Transverse colon (tissue), 4 donors: ENCODE measurements at regions of chr10 and their contacts with region 1.

Region 1: DNA sequence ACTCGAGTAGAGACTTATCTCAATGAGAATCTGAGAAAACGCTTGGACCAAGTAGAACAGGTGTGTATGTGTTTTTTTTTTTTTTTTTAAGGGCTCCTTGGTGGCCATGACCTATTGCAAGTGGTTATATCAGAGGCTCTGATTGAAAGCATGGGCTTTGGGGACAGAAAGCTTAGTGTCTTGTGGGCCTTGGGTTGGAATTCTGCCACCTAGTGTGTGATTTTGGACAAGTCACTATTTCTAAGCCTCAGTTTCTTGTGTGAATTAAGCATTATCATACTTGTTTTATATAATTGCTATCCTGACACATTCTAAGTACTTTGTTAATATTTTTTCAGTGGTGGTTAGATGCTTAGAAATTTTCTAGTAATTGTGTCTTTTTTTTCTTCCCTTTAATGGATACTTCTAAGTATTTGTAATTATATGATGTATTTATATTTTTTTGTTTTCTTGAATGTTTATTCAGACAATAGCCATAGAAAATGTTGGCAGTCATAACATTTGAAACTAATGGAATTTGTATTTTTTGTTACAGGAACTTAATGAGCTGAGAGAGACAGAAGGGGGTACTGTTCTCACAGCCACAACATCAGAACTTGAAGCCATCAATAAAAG is 33.1 kb downstream of the SMC3 start:
- DNase-seq: no peak
- H3K4me3 ChIP-seq: no peak overlapping the region
- H3K27ac ChIP-seq: no peak overlapping the region
- H3K4me1 ChIP-seq: no peaks in the 10 kb centered on the region
- H3K27me3 ChIP-seq: no peaks in the 10 kb centered on the region
- CTCF ChIP-seq: peak; percentile 32 to 46 (median 43)
- EP300 ChIP-seq: no peak
- POLR2A ChIP-seq: no peak

Region 2: GRCh38 chr10:110460111-110460809 is 140.3 kb before region 1 on chr10:
- in situ Hi-C with region 1: no loop called
- intact Hi-C with region 1: no loop called
- DNase-seq: peak; percentile 42
- H3K4me3 ChIP-seq: no peak overlapping the region
- H3K27ac ChIP-seq: peak overlapping the region in 2 of 4 donors; percentile 6 to 23
- H3K4me1 ChIP-seq: no peaks in the 10 kb centered on the region
- H3K27me3 ChIP-seq: no peaks in the 10 kb centered on the region
- CTCF ChIP-seq: no peak
- EP300 ChIP-seq: no peak
- POLR2A ChIP-seq: no peak

Region 3: GRCh38 chr10:110671788-110672579 is 71.4 kb after region 1 on chr10:
- in situ Hi-C with region 1: loop called in 1 of 4 experiments (anchors 10 kb)
- intact Hi-C with region 1: no loop called
- DNase-seq: peak; percentile 75
- H3K4me3 ChIP-seq: peak overlapping the region; percentile 41 to 55 (median 50)
- H3K27ac ChIP-seq: peak overlapping the region; percentile 49 to 70 (median 58)
- H3K4me1 ChIP-seq: peaks cover 0 to 11% (median 2%) of the 10 kb centered on the region in 4 donors
- H3K27me3 ChIP-seq: peaks cover 18% of the 10 kb centered on the region
- CTCF ChIP-seq: peak; percentile 71 to 95 (median 91)
- EP300 ChIP-seq: no peak
- POLR2A ChIP-seq: no peak